Transverse colon (tissue), 4 donors: ENCODE measurements at regions of chr6 and their contacts with region 1.

Region 1: DNA sequence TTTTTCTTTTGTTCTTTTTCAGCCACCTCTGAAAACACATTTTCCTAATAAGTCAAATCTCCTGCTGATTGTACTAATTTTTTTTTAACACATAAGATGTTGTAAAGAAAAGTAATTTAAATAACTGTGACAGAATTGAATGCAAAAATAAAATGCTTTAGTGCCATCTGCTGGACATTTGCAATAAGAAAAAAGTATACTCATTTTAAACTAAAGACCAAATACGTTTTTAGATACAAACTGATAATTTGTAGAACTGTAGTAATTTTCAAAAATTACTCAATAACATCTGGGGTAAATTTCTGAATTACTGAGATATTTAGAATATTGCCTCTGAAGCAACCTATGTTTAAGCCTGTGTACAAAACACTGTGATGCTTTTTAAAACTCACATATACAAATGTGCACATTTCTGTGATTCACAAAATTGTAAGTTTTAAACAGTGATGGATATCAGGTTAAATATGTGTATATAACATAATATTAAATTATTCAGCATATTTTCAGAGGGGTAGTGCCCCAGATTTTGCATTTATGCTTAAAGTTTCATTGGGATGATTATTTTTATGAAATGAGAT is 198.7 kb downstream of the RIMS1 start:
- DNase-seq: no peak
- H3K4me3 ChIP-seq: no peak overlapping the region
- H3K27ac ChIP-seq: no peak overlapping the region
- H3K4me1 ChIP-seq: no peaks in the 10 kb centered on the region
- H3K27me3 ChIP-seq: no peaks in the 10 kb centered on the region
- CTCF ChIP-seq: peak; percentile 31 to 53 (median 40)
- EP300 ChIP-seq: no peak
- POLR2A ChIP-seq: no peak

Region 2: DNA sequence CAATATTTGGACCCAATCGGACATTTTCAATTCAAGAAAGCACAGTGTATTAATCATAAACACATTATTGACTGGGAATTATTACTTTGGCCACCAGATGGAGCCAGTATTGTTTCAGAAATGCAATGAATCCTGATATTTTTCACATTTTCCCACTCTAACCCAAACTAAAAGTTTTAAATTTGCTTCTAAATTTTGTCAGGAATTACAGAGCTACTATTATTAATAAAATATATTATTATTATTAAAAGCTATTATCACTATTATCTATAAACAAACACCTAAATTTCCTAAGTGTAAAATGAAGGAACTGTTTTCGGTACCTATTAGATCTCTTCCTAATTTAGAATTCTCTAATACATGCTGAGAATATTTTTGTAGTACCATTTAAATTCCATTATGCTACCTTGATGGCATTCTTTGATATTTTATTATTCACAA is 551.1 kb before region 1 on chr6:
- in situ Hi-C with region 1: loop called in 3 of 4 experiments (anchors 10 to 25 kb)
- intact Hi-C with region 1: no loop called
- DNase-seq: no peak
- H3K4me3 ChIP-seq: no peak overlapping the region
- H3K27ac ChIP-seq: no peak overlapping the region
- H3K4me1 ChIP-seq: no peaks in the 10 kb centered on the region
- H3K27me3 ChIP-seq: no peaks in the 10 kb centered on the region
- CTCF ChIP-seq: peak; percentile 29 to 61 (median 52)
- EP300 ChIP-seq: no peak
- POLR2A ChIP-seq: no peak